ENCODE measurements at regions of chr1 and their contacts with region 1.

Region 1: GRCh38 chr1:182595641-182596240 is 6.7 kb upstream of the RNASEL start:
- DNase-seq: peak; percentile 50 to 70 (median 58)
- H3K4me3 ChIP-seq: no peak overlapping the region
- H3K27ac ChIP-seq: no peak overlapping the region
- H3K4me1 ChIP-seq: peaks cover 0 to 9% (median 6%) of the 10 kb centered on the region in 4 experiments
- H3K27me3 ChIP-seq: peaks cover 0 to 3% (median 0%) of the 10 kb centered on the region in 5 experiments

Region 2: DNA sequence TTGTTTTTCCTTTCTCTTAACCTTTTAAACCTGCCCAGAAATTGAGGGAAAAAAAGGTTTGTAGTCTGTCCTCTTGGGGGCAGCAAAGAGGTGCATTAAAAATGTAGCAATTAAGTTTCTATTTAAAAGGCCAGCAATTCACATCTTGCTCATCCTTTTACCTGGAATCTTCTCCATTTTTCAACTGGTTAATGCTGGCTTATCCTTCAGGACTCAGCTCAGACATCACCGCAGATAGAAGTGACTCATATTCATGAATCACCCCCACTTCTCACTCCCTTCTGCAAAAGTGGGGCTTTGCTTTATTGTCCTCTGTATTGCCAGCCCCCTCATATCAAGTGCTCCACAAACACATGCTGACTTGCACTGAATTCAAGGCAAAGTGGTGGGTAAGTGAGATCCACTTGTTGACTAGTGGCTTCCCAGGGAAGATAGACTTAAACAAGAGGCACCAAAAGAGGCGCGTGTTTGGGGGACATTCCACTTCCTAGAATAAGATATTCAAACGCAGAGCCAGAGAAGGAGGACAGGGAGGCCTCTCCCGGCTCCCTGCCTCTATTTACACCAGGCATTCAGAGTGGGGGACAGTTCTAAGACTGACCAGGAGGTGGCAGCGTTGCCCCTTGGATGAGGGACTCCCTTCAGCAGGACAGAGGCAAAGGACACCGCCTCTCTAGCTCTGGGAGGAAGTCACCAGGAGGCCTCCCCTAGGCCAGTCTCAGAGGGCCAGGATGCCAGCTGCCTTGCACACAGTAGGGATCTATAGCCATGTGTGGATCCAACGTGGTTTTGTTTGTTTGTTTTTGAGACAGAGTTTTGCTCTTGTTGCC is 511.0 kb before region 1 on chr1:
- CTCF ChIA-PET with region 1: interaction called, 12 read pairs
- POLR2A ChIA-PET with region 1: no interaction called
- DNase-seq: peak; percentile 78 to 89 (median 85)
- H3K4me3 ChIP-seq: peak overlapping the region in 3 of 7 experiments; percentile 29 to 49 (median 48)
- H3K27ac ChIP-seq: no peak overlapping the region
- H3K4me1 ChIP-seq: peaks cover 0 to 19% (median 16%) of the 10 kb centered on the region in 4 experiments
- H3K27me3 ChIP-seq: no peaks in the 10 kb centered on the region

Region 3: GRCh38 chr1:182350839-182351238 is 244.9 kb before region 1 on chr1:
- CTCF ChIA-PET with region 1: no interaction called
- POLR2A ChIA-PET with region 1: no interaction called
- DNase-seq: no peak
- H3K4me3 ChIP-seq: no peak overlapping the region
- H3K27ac ChIP-seq: no peak overlapping the region
- H3K4me1 ChIP-seq: no peaks in the 10 kb centered on the region
- H3K27me3 ChIP-seq: no peaks in the 10 kb centered on the region

Region 4: GRCh38 chr1:182795563-182796228 is 200.0 kb after region 1 on chr1:
- CTCF ChIA-PET with region 1: interaction called, 525 read pairs
- POLR2A ChIA-PET with region 1: no interaction called
- DNase-seq: peak; percentile 88 to 98 (median 95)
- H3K4me3 ChIP-seq: peak overlapping the region in 3 of 7 experiments; percentile 3 to 26 (median 8)
- H3K27ac ChIP-seq: peak overlapping the region in 1 of 2 experiments; percentile 6
- H3K4me1 ChIP-seq: peaks cover 10 to 17% (median 14%) of the 10 kb centered on the region in 4 experiments
- H3K27me3 ChIP-seq: no peaks in the 10 kb centered on the region

Region 5: DNA sequence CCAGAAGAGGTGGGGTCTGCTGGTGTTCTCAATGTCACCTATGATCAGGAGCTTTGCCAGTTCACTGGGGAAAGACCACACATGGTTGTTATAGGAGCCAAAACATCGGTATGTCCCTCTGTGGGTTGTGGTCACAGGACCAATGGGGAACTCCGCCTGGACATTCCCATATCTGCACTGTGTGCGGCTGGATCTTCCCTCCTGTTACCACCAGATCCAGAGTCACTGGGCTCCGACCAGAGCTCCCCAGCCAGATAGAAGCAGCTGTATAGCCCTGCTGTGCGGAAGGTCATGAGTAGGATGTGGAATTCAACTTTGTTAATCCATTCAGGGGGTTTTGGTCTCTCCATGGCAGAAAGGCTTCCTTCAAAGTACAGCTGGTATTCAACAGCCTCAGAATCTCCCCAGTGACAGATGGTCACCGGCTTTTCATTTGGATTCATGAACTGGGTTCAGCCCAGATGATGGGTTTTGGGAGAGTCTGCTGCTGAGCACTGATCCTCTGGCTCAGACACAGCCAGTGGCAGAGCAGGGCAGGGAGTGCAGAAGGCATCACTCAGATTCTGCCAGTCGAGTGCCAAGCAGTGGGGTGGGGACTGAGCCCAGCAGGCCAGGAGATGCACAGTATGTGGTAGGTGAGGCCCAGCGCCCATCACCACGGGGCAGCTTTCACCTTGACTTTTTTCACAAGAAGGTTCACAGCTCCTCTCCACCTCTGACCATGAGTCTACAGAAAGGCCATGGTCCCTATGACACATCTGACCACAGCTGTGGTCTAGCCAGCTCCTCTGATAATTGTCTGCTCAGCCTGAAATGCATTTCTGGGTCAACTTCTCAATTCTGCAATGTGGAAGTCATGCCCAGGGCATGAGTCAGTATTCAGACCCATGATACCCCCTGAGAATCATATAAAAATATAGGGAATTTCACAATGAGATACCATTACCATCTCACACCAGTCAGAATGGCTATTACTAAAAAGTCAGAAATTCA is 360.2 kb after region 1 on chr1:
- CTCF ChIA-PET with region 1: no interaction called
- POLR2A ChIA-PET with region 1: no interaction called
- DNase-seq: peak in 2 of 3 donors; percentile 15 to 17
- H3K4me3 ChIP-seq: no peak overlapping the region
- H3K27ac ChIP-seq: no peak overlapping the region
- H3K4me1 ChIP-seq: peaks cover 0 to 9% (median 5%) of the 10 kb centered on the region in 4 experiments
- H3K27me3 ChIP-seq: peaks cover 0 to 32% (median 6%) of the 10 kb centered on the region in 5 experiments

Measured in common myeloid progenitor, CD34-positive (primary cell).